ENCODE measurements at regions of chr12 and their contacts with region 1.

Region 1: DNA sequence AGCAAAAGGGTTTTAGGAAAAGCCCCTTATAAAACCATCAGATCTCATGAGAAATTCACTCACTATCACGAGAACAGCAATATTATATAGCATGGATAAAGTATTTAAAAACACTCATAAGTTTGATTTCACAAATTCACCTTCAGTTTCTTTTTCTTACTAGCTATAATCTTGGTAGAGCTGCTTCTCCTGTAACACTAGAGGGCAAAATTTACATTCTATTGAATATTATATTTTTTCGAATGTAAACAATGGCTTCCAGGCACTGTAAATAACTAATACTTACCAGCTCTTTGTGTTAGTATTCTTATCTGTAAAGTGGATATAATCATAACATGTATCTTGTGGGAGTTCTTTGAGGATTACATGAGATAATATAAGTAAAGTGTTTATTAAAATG is 259.6 kb downstream of the CCER1 start:
- DNase-seq: no peak
- ATAC-seq: no peak
- H3K4me3 ChIP-seq: no peak overlapping the region
- H3K27ac ChIP-seq: no peak overlapping the region
- H3K4me1 ChIP-seq: no peaks in the 10 kb centered on the region
- H3K27me3 ChIP-seq: no peaks in the 10 kb centered on the region
- CTCF ChIP-seq: peak in 4 of 12 donors; percentile 23 to 38 (median 24)
- POLR2A ChIP-seq: no peak

Region 2: GRCh38 chr12:90854136-90854689 is 158.8 kb after region 1 on chr12:
- intact Hi-C with region 1: loop called in 5 of 10 experiments (anchors 10 kb)
- DNase-seq: no peak
- ATAC-seq: no peak
- H3K4me3 ChIP-seq: no peak overlapping the region
- H3K27ac ChIP-seq: no peak overlapping the region
- H3K4me1 ChIP-seq: peaks cover 0 to 11% (median 0%) of the 10 kb centered on the region in 12 donors
- H3K27me3 ChIP-seq: no peaks in the 10 kb centered on the region
- CTCF ChIP-seq: peak; percentile 46 to 80 (median 70)
- POLR2A ChIP-seq: no peak

Region 3: GRCh38 chr12:90909069-90909770 is 213.8 kb after region 1 on chr12:
- intact Hi-C with region 1: loop called in 1 of 10 experiments (anchors 10 kb)
- DNase-seq: no peak
- ATAC-seq: peak in 1 of 4 donors; percentile 56
- H3K4me3 ChIP-seq: no peak overlapping the region
- H3K27ac ChIP-seq: no peak overlapping the region
- H3K4me1 ChIP-seq: no peaks in the 10 kb centered on the region
- H3K27me3 ChIP-seq: no peaks in the 10 kb centered on the region
- CTCF ChIP-seq: peak; percentile 50 to 83 (median 66)
- POLR2A ChIP-seq: no peak